B cell (primary cell): ENCODE measurements at regions of chr12 and their contacts with region 1.

Region 1: GRCh38 chr12:44358636-44359035 is 517.5 kb downstream of the NELL2 start:
- DNase-seq: no peak
- ATAC-seq: no peak
- H3K4me3 ChIP-seq: no peak overlapping the region
- H3K4me3 Mint-ChIP-seq: no peak overlapping the region
- H3K27ac ChIP-seq: no peak overlapping the region
- H3K27ac Mint-ChIP-seq: no peak overlapping the region
- H3K4me1 ChIP-seq: no peaks in the 10 kb centered on the region
- H3K4me1 Mint-ChIP-seq: no peaks in the 10 kb centered on the region
- H3K27me3 ChIP-seq: no peaks in the 10 kb centered on the region
- H3K27me3 Mint-ChIP-seq: no peaks in the 10 kb centered on the region
- CTCF ChIP-seq: no peak

Region 2: DNA sequence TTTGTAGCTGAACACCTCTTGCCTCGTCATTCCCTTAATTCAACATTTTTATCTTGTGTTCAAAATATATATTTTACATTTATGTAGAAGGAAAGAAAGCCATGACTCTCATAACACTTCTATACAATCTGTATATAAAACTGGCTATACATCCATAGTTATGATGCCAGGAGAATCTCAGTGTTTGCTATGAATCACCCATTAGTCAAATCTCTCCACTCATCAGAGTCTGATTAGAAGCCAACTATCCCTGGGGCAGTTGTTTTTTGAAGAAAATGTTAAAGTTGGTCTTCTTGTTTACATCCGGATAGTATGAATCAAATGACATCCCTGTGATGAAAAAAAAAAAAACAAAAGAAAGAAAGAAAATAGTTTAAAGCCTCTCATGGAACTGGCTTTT is 13.6 kb after region 1 on chr12:
- CTCF ChIA-PET with region 1: no interaction called
- POLR2A ChIA-PET with region 1: interaction called, 11 read pairs
- intact Hi-C with region 1: no loop called
- DNase-seq: no peak
- ATAC-seq: no peak
- H3K4me3 ChIP-seq: no peak overlapping the region
- H3K4me3 Mint-ChIP-seq: no peak overlapping the region
- H3K27ac ChIP-seq: no peak overlapping the region
- H3K27ac Mint-ChIP-seq: no peak overlapping the region
- H3K4me1 ChIP-seq: peaks cover 4 to 7% of the 10 kb centered on the region in 2 donors
- H3K4me1 Mint-ChIP-seq: peaks cover 15% of the 10 kb centered on the region
- H3K27me3 ChIP-seq: no peaks in the 10 kb centered on the region
- H3K27me3 Mint-ChIP-seq: no peaks in the 10 kb centered on the region
- CTCF ChIP-seq: no peak

Region 3: GRCh38 chr12:44397631-44398030 is 39.0 kb after region 1 on chr12:
- CTCF ChIA-PET with region 1: no interaction called
- POLR2A ChIA-PET with region 1: no interaction called
- intact Hi-C with region 1: no loop called
- DNase-seq: no peak
- ATAC-seq: no peak
- H3K4me3 ChIP-seq: no peak overlapping the region
- H3K4me3 Mint-ChIP-seq: no peak overlapping the region
- H3K27ac ChIP-seq: no peak overlapping the region
- H3K27ac Mint-ChIP-seq: no peak overlapping the region
- H3K4me1 ChIP-seq: no peaks in the 10 kb centered on the region
- H3K4me1 Mint-ChIP-seq: no peaks in the 10 kb centered on the region
- H3K27me3 ChIP-seq: no peaks in the 10 kb centered on the region
- H3K27me3 Mint-ChIP-seq: no peaks in the 10 kb centered on the region
- CTCF ChIP-seq: no peak

Region 4: DNA sequence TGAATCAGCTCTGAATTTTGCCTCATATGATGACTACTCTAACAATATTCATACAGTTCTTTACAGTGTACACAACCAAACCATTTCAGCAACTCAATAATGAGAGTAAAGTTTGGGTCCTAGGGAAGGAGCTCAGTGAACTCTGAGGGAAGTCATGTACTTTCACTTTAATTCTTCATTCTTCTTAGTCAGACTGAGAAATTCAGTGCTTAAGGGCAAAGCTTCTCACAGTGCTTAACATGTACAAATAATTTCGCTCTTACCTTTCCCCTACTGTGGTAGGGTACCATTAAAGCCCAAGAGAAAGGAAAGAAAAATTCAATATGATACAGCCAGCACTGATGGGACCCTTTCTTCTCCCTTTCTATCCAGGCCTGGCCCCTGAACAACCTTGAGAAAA is 82.5 kb after region 1 on chr12:
- CTCF ChIA-PET with region 1: no interaction called
- POLR2A ChIA-PET with region 1: no interaction called
- intact Hi-C with region 1: no loop called
- DNase-seq: no peak
- ATAC-seq: no peak
- H3K4me3 ChIP-seq: no peak overlapping the region
- H3K4me3 Mint-ChIP-seq: no peak overlapping the region
- H3K27ac ChIP-seq: no peak overlapping the region
- H3K27ac Mint-ChIP-seq: no peak overlapping the region
- H3K4me1 ChIP-seq: no peaks in the 10 kb centered on the region
- H3K4me1 Mint-ChIP-seq: no peaks in the 10 kb centered on the region
- H3K27me3 ChIP-seq: no peaks in the 10 kb centered on the region
- H3K27me3 Mint-ChIP-seq: no peaks in the 10 kb centered on the region
- CTCF ChIP-seq: no peak